Naive thymus-derived CD8-positive, alpha-beta T cell (primary cell): ENCODE measurements at regions of chr11 and their contacts with region 1.

Region 1: DNA sequence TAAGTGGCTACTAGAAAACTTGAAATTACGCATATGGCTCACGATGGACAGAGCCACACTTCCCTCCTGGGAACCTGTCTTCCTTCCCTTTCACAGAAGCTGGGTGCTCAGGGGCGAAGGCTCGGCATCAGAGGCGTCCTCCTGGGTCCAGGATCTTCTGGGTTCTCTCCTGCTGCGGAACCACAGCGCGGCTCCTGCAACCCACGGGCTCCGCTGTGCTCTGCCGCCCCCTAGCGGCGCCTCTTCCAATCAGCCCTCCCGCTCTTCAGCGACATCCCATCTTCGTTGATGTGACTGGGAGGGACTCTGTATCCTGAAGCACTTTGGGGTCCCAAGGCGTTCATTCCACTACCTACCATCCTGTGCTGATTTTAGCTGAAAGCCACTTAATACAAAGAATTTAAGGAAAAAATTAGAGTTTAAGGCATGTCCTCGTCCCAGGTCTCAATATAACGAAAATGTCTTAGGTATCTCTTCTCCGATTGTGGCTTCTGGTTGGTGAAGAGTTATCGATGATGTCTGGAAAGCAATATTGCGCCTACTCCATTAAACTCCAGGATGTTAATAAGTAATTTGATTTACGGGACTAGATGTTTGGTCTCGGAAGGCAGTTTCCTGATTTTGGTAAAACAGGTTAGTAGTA is 14.8 kb upstream of the RPS3 start:
- DNase-seq: peak; percentile 57 to 87 (median 76)
- ATAC-seq: peak; percentile 79 to 90
- H3K4me3 Mint-ChIP-seq: peak overlapping the region in 9 of 10 donors; percentile 57 to 90 (median 81)
- H3K27ac Mint-ChIP-seq: peak overlapping the region in 9 of 10 donors; percentile 82 to 96 (median 92)
- H3K4me1 Mint-ChIP-seq: peaks cover 13 to 28% (median 27%) of the 10 kb centered on the region in 4 donors
- H3K27me3 Mint-ChIP-seq: no peaks in the 10 kb centered on the region

Region 2: DNA sequence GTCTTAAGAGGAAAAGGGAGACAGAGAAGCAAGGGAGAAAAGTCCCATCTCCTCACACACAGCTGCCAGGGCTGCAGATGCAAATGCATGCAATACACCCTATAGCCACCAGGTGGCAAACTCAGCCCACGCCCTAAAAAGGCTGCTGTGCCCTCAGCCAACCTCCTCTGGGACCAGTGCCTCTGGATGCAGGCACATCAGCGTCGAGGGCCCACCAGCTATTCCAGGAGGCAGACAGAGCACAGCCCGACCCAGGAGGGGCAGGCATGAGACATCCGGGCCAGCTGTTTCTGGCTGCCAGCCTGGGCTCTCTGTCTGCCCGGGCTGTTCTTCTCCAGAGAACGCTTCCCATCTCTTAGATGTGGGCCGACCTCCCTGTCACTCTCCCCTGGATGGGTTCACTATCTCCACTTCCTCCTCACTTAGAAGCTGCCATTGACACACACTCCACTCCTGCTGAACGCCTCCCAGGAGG is 104.3 kb before region 1 on chr11:
- POLR2A ChIA-PET with region 1: interaction called, 73 read pairs
- DNase-seq: peak; percentile 54 to 86 (median 72)
- ATAC-seq: peak; percentile 42
- H3K4me3 Mint-ChIP-seq: peak overlapping the region in 7 of 10 donors; percentile 7 to 56 (median 38)
- H3K27ac Mint-ChIP-seq: peak overlapping the region; percentile 79 to 97 (median 92)
- H3K4me1 Mint-ChIP-seq: peaks cover 33 to 56% (median 50%) of the 10 kb centered on the region in 4 donors
- H3K27me3 Mint-ChIP-seq: no peaks in the 10 kb centered on the region

Region 3: DNA sequence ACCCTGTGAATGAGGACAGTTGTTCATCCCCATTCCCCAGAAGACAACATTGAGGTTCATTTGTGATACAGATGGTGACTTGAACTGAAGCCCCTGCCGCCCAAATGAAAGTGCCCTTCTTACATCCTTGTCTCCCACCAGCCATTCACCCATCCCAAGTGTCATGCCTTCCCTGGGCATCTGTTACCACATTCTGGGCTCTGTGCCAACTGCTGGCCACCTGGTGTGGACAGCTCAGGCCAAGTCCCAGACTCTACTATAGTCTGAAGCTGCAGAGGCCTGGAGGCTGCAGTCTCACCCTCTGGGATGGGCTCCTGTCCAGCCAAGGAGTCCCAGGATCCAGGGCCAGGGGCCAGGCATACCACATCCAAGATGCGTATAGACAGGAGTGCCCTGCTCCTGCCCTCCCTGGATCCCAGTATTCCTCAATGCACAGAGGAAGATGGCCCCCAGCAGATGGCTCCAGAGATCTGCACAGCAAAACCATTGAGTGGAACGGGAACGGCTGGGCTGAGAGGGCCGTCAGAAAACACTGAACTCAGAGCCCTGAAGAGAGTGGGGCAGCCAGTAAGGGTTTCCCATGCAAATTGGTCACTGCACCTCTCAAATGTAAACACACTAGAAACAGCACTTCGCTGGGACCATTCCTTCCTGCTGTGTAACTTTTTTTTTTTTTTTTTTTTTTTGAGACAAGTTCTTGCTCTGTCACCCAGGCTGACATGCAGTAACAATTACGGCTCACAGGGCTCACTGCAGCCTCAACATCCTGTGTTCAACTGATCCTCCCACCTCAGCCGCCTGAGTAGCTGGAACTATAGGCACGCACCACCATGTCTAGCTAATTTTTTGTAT is 55.9 kb before region 1 on chr11:
- POLR2A ChIA-PET with region 1: interaction called, 12 read pairs
- DNase-seq: peak; percentile 19 to 86 (median 58)
- ATAC-seq: peak; percentile 92 to 94
- H3K4me3 Mint-ChIP-seq: peak overlapping the region; percentile 36 to 79 (median 66)
- H3K27ac Mint-ChIP-seq: peak overlapping the region; percentile 31 to 96 (median 90)
- H3K4me1 Mint-ChIP-seq: peaks cover 51 to 86% (median 80%) of the 10 kb centered on the region in 4 donors
- H3K27me3 Mint-ChIP-seq: no peaks in the 10 kb centered on the region

Region 4: DNA sequence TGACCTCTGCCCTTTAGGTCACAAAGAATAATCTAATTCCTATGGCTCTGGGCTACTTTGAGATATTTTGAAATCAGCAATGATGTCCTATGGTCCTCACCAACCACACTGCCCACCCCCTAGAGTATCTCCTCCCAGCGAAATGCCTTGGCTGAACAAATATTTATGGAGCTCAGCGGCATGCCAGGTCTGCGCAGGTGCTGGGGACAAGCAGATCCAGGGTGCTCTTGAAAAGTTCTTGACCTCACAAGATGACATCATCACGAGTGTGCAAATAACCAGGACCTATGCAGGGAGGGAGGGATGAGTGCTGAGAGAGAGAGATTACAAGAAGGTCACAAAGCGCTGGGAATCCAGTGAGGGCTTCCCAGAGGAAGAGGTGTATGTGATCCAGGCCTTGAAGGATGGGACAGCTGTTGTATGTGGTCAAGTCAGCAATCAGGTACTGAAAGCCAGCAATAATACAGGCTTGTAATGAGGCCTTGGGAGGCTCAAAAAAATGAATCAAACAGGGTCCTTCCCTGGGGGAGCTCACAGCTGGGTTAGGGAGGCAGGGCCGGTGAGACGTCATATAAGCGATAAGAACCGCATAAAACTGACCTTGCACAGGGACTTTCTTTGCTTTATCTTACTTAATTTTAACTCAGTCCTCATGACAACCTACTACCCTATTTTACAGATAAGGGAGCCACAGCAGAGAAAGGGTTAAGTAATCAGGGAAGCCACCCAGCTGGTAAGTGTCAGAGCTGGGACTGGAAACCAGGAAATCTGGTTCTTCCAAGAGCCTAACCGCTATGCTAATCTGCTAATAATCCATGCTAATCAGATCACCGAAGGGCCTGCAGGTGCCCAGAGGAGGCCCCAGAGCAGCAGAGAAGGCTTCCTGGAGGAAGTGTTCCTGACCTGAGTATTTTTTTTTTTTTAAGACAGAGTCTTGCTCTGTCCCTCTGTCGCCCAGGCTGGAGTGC is 41.4 kb before region 1 on chr11:
- POLR2A ChIA-PET with region 1: interaction called, 14 read pairs
- DNase-seq: no peak
- ATAC-seq: no peak
- H3K4me3 Mint-ChIP-seq: peak overlapping the region in 9 of 10 donors; percentile 1 to 93 (median 57)
- H3K27ac Mint-ChIP-seq: peak overlapping the region; percentile 66 to 98 (median 84)
- H3K4me1 Mint-ChIP-seq: peaks cover 72 to 100% (median 99%) of the 10 kb centered on the region in 4 donors
- H3K27me3 Mint-ChIP-seq: no peaks in the 10 kb centered on the region

Region 5: GRCh38 chr11:75450826-75451821 is 66.6 kb after region 1 on chr11:
- POLR2A ChIA-PET with region 1: no interaction called
- DNase-seq: peak in 4 of 10 donors; percentile 16 to 35 (median 29)
- ATAC-seq: no peak
- H3K4me3 Mint-ChIP-seq: no peak overlapping the region
- H3K27ac Mint-ChIP-seq: no peak overlapping the region
- H3K4me1 Mint-ChIP-seq: no peaks in the 10 kb centered on the region
- H3K27me3 Mint-ChIP-seq: no peaks in the 10 kb centered on the region